CD4-positive, alpha-beta T cell (primary cell): ENCODE measurements at regions of chr1 and their contacts with region 1.

Region 1: DNA sequence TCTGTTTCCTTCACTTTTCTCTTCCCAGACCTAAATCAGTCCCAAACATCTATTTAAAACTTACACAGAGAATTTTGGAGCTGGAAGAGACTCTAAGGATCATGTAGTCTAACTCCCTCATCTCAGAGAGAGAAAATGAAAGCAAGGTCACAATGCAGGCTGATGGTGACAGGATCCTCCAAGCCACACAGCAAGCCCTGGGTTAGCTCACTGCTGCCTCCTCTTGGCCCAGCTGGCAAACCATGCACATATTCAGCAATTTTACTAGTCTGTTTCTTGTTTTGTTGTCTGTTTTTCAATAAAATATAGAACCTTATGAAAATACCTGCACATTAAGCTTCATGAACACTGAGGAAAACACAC is 27.7 kb upstream of the LY9 start:
- DNase-seq: peak; percentile 77 to 93 (median 82)
- ATAC-seq: peak; percentile 95
- H3K4me3 ChIP-seq: peak overlapping the region; percentile 34
- H3K4me3 Mint-ChIP-seq: peak overlapping the region; percentile 72
- H3K27ac ChIP-seq: peak overlapping the region; percentile 56 to 57
- H3K27ac Mint-ChIP-seq: peak overlapping the region; percentile 93
- H3K4me1 ChIP-seq: peaks cover 23% of the 10 kb centered on the region
- H3K4me1 Mint-ChIP-seq: peaks cover 21% of the 10 kb centered on the region
- H3K27me3 ChIP-seq: no peaks in the 10 kb centered on the region
- H3K27me3 Mint-ChIP-seq: no peaks in the 10 kb centered on the region
- CTCF ChIP-seq: peak; percentile 78

Region 2: GRCh38 chr1:160244209-160244608 is 524.1 kb before region 1 on chr1:
- CTCF ChIA-PET with region 1: no interaction called
- POLR2A ChIA-PET with region 1: no interaction called
- intact Hi-C with region 1: no loop called
- DNase-seq: no peak
- ATAC-seq: no peak
- H3K4me3 ChIP-seq: no peak overlapping the region
- H3K4me3 Mint-ChIP-seq: no peak overlapping the region
- H3K27ac ChIP-seq: no peak overlapping the region
- H3K27ac Mint-ChIP-seq: no peak overlapping the region
- H3K4me1 ChIP-seq: peaks cover 4% of the 10 kb centered on the region
- H3K4me1 Mint-ChIP-seq: peaks cover 23% of the 10 kb centered on the region
- H3K27me3 ChIP-seq: no peaks in the 10 kb centered on the region
- H3K27me3 Mint-ChIP-seq: no peaks in the 10 kb centered on the region
- CTCF ChIP-seq: no peak

Region 3: GRCh38 chr1:160291248-160292220 is 476.7 kb before region 1 on chr1:
- CTCF ChIA-PET with region 1: no interaction called
- POLR2A ChIA-PET with region 1: no interaction called
- intact Hi-C with region 1: no loop called
- DNase-seq: peak; percentile 48 to 88 (median 58)
- ATAC-seq: peak; percentile 99
- H3K4me3 ChIP-seq: no peak overlapping the region
- H3K4me3 Mint-ChIP-seq: peak overlapping the region; percentile 5
- H3K27ac ChIP-seq: no peak overlapping the region
- H3K27ac Mint-ChIP-seq: peak overlapping the region; percentile 16
- H3K4me1 ChIP-seq: peaks cover 6% of the 10 kb centered on the region
- H3K4me1 Mint-ChIP-seq: peaks cover 7% of the 10 kb centered on the region
- H3K27me3 ChIP-seq: no peaks in the 10 kb centered on the region
- H3K27me3 Mint-ChIP-seq: no peaks in the 10 kb centered on the region
- CTCF ChIP-seq: peak; percentile 78

Region 4: DNA sequence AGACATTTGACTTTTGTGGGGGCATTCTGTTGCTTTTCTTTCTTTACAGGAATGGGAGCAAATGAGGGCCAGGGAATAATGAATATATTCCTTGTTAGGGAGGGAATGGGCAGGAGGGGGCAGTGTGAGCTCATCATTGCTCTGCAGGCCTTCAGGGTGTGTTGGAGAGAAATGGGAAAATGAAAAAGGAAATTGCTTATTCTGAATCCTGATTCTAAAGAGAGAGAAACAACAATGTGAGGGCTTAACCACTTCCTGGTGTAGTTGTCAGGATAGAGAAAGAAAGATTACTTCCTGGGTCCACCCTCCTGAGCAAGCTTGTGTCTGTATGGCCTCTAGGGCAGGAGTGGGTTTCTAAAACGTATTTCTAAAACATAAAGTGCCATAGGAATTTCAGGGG is 339.6 kb before region 1 on chr1:
- CTCF ChIA-PET with region 1: no interaction called
- POLR2A ChIA-PET with region 1: no interaction called
- intact Hi-C with region 1: loop called in 1 of 2 experiments (anchors 5 kb)
- DNase-seq: peak in 10 of 14 experiments; percentile 15 to 82 (median 42)
- ATAC-seq: peak; percentile 76
- H3K4me3 ChIP-seq: no peak overlapping the region
- H3K4me3 Mint-ChIP-seq: peak overlapping the region; percentile 72
- H3K27ac ChIP-seq: peak overlapping the region; percentile 47 to 74
- H3K27ac Mint-ChIP-seq: peak overlapping the region; percentile 88
- H3K4me1 ChIP-seq: peaks cover 52% of the 10 kb centered on the region
- H3K4me1 Mint-ChIP-seq: peaks cover 63% of the 10 kb centered on the region
- H3K27me3 ChIP-seq: no peaks in the 10 kb centered on the region
- H3K27me3 Mint-ChIP-seq: no peaks in the 10 kb centered on the region
- CTCF ChIP-seq: peak; percentile 86

Region 5: GRCh38 chr1:160675641-160676410 is 92.5 kb before region 1 on chr1:
- CTCF ChIA-PET with region 1: interaction called, 56 read pairs
- POLR2A ChIA-PET with region 1: interaction called, 18 read pairs
- intact Hi-C with region 1: loop called (anchors 1 kb)
- DNase-seq: peak; percentile 57 to 88 (median 72)
- ATAC-seq: peak; percentile 80
- H3K4me3 ChIP-seq: no peak overlapping the region
- H3K4me3 Mint-ChIP-seq: peak overlapping the region; percentile 42
- H3K27ac ChIP-seq: peak overlapping the region; percentile 37 to 38
- H3K27ac Mint-ChIP-seq: no peak overlapping the region
- H3K4me1 ChIP-seq: peaks cover 40% of the 10 kb centered on the region
- H3K4me1 Mint-ChIP-seq: peaks cover 5% of the 10 kb centered on the region
- H3K27me3 ChIP-seq: no peaks in the 10 kb centered on the region
- H3K27me3 Mint-ChIP-seq: no peaks in the 10 kb centered on the region
- CTCF ChIP-seq: peak; percentile 79

Region 6: GRCh38 chr1:160711602-160712311 is 56.5 kb before region 1 on chr1 and contains the start of gene CD48:
- CTCF ChIA-PET with region 1: interaction called, 9 read pairs
- POLR2A ChIA-PET with region 1: interaction called, 18 read pairs
- intact Hi-C with region 1: no loop called
- DNase-seq: peak in 11 of 14 experiments; percentile 26 to 88 (median 50)
- ATAC-seq: peak; percentile 52
- H3K4me3 ChIP-seq: peak within 1 kb of the TSS; percentile 73
- H3K4me3 Mint-ChIP-seq: no peak within 1 kb of the TSS
- H3K27ac ChIP-seq: peak within 1 kb of the TSS; percentile 86 to 93
- H3K27ac Mint-ChIP-seq: no peak within 1 kb of the TSS
- H3K4me1 ChIP-seq: peaks cover 52% of the 10 kb centered on the region
- H3K4me1 Mint-ChIP-seq: peaks cover 50% of the 10 kb centered on the region
- H3K27me3 ChIP-seq: no peaks in the 10 kb centered on the region
- H3K27me3 Mint-ChIP-seq: no peaks in the 10 kb centered on the region
- CTCF ChIP-seq: no peak
- total RNA-seq, gene CD48: 387 to 395 TPM

Region 7: GRCh38 chr1:160744199-160744851 is 24.0 kb before region 1 on chr1:
- CTCF ChIA-PET with region 1: interaction called, 6 read pairs
- POLR2A ChIA-PET with region 1: interaction called, 12 read pairs
- intact Hi-C with region 1: no loop called
- DNase-seq: peak in 3 of 14 experiments; percentile 46 to 76 (median 47)
- ATAC-seq: peak; percentile 56
- H3K4me3 ChIP-seq: no peak overlapping the region
- H3K4me3 Mint-ChIP-seq: peak overlapping the region; percentile 42
- H3K27ac ChIP-seq: no peak overlapping the region
- H3K27ac Mint-ChIP-seq: peak overlapping the region; percentile 57
- H3K4me1 ChIP-seq: peaks cover 39% of the 10 kb centered on the region
- H3K4me1 Mint-ChIP-seq: peaks cover 17% of the 10 kb centered on the region
- H3K27me3 ChIP-seq: no peaks in the 10 kb centered on the region
- H3K27me3 Mint-ChIP-seq: no peaks in the 10 kb centered on the region
- CTCF ChIP-seq: no peak

Region 8: DNA sequence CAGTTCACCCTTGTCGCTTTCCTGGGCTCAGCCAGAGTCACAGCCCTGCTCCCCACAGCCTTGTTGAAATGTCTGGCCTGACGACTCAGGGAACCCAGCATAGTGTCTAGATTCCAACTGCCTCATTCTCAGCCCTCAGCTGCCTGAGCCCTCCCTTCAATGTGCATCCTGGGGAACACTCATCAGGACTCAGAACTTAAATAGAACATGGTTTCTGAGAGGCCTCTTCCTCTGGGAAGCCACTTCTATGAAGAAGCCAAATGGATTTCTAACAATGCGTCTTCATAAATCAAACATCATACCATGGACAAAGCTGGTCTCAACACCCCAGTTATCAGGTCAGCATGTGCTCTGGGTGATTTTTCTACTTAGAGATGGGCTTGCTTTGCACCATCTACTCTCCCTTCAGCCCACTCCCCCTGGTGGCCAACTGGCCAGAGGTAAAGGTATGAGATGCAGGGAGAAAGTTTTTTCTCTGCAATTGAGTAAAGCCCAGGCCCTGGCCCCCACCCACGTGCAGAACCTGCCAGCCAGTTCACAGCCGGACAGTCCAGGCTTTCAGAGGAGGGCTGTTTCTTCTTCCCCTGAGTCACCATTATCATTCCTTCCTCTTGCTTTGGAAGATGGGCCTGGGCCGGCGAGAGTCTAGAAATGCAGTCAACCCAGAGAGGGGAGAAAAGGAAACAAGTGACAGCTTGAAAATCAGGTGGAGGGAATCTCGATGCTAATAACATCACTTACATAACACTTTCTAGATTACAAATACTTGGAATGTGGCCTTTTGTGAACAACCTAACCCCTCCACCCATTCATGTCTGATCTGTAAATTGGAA is 62.3 kb after region 1 on chr1:
- CTCF ChIA-PET with region 1: interaction called, 14 read pairs
- POLR2A ChIA-PET with region 1: no interaction called
- intact Hi-C with region 1: loop called in 1 of 2 experiments (anchors 5 kb)
- DNase-seq: peak; percentile 67 to 89 (median 76)
- ATAC-seq: peak; percentile 84
- H3K4me3 ChIP-seq: no peak overlapping the region
- H3K4me3 Mint-ChIP-seq: no peak overlapping the region
- H3K27ac ChIP-seq: no peak overlapping the region
- H3K27ac Mint-ChIP-seq: peak overlapping the region; percentile 81
- H3K4me1 ChIP-seq: peaks cover 17% of the 10 kb centered on the region
- H3K4me1 Mint-ChIP-seq: peaks cover 35% of the 10 kb centered on the region
- H3K27me3 ChIP-seq: no peaks in the 10 kb centered on the region
- H3K27me3 Mint-ChIP-seq: no peaks in the 10 kb centered on the region
- CTCF ChIP-seq: peak; percentile 87

Region 9: DNA sequence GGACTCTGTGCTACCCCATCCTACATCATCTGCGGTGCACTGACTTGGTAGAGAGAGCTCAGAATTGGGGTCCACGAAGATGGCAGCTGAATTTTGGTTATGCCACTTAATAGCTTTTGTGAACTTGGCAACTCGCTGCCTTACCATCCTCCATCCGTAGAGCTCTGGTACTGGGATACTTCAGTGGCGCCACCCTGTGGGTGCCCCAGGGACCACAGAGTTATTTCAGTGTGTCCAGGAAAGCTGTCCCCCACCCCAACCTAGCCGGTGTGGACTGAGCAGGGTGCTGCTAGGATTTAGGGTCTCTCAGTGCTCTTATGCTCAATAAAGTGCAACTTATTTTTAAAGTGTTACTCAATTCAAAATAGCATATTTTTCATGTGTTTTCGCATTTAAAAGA is 286.5 kb after region 1 on chr1:
- CTCF ChIA-PET with region 1: no interaction called
- POLR2A ChIA-PET with region 1: no interaction called
- intact Hi-C with region 1: no loop called
- DNase-seq: peak in 1 of 14 experiments; percentile 33
- ATAC-seq: no peak
- H3K4me3 ChIP-seq: no peak overlapping the region
- H3K4me3 Mint-ChIP-seq: no peak overlapping the region
- H3K27ac ChIP-seq: peak overlapping the region in 1 of 2 donors; percentile 21
- H3K27ac Mint-ChIP-seq: no peak overlapping the region
- H3K4me1 ChIP-seq: peaks cover 35% of the 10 kb centered on the region
- H3K4me1 Mint-ChIP-seq: peaks cover 27% of the 10 kb centered on the region
- H3K27me3 ChIP-seq: no peaks in the 10 kb centered on the region
- H3K27me3 Mint-ChIP-seq: no peaks in the 10 kb centered on the region
- CTCF ChIP-seq: peak; percentile 32